ENCODE measurements at regions of chr5 and their contacts with region 1.

Region 1: DNA sequence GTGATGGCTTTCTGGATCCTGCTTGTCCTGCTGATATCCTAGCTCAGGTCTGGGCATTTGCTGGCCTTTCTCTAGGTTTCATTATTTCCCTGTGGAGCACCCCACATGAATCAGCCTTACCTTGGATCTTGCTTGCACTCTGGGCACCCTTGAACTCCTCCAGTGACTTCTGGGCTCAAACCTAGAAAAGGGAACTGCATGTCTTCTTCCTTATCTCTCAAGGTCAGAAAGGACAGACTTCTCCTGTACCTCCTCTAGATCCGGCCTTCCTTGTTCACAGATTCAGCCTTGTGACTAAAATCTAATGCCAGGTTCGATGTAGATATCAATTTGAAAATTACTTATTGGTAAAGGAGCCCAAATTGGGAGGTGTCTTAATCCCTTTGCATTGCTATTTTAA is 267.9 kb downstream of the PARP8 start:
- DNase-seq: no peak
- H3K4me3 Mint-ChIP-seq: no peak overlapping the region
- H3K27ac Mint-ChIP-seq: no peak overlapping the region
- H3K4me1 Mint-ChIP-seq: no peaks in the 10 kb centered on the region
- H3K27me3 Mint-ChIP-seq: peaks cover 12% of the 10 kb centered on the region

Region 2: GRCh38 chr5:50667653-50668595 is 266.4 kb before region 1 on chr5:
- CTCF ChIA-PET with region 1: no interaction called
- intact Hi-C with region 1: no loop called
- DNase-seq: peak; percentile 88
- H3K4me3 Mint-ChIP-seq: peak overlapping the region; percentile 89
- H3K27ac Mint-ChIP-seq: peak overlapping the region; percentile 99
- H3K4me1 Mint-ChIP-seq: peaks cover 36% of the 10 kb centered on the region
- H3K27me3 Mint-ChIP-seq: no peaks in the 10 kb centered on the region

Region 3: GRCh38 chr5:50947906-50948683 is 13.8 kb after region 1 on chr5:
- CTCF ChIA-PET with region 1: interaction called, 3 read pairs
- intact Hi-C with region 1: loop called (anchors 2 kb)
- DNase-seq: no peak
- H3K4me3 Mint-ChIP-seq: no peak overlapping the region
- H3K27ac Mint-ChIP-seq: no peak overlapping the region
- H3K4me1 Mint-ChIP-seq: no peaks in the 10 kb centered on the region
- H3K27me3 Mint-ChIP-seq: no peaks in the 10 kb centered on the region

Region 4: DNA sequence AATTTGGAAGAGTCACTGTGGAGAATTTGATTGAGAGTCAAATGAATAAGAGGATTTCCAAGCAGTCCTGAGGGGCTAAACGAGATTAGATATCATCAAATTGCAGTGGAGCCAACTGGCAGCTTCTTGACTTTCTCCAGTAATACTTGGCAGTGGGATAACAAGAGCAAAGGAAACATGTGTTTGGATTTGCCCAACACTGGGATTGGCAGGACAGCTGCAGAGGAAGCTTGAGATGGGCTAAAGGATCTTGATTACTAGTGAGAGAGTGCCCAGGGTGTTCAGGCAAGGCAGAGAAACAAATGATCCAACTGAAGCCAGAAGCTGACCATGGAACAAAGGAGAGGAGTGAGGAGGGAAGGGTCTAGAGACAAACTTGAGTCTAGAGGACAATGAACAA is 92.9 kb after region 1 on chr5:
- CTCF ChIA-PET with region 1: no interaction called
- intact Hi-C with region 1: no loop called
- DNase-seq: no peak
- H3K4me3 Mint-ChIP-seq: no peak overlapping the region
- H3K27ac Mint-ChIP-seq: no peak overlapping the region
- H3K4me1 Mint-ChIP-seq: peaks cover 2% of the 10 kb centered on the region
- H3K27me3 Mint-ChIP-seq: peaks cover 5% of the 10 kb centered on the region